Calu3 (cell line): ENCODE measurements at regions of chr3 and their contacts with region 1.

Region 1: DNA sequence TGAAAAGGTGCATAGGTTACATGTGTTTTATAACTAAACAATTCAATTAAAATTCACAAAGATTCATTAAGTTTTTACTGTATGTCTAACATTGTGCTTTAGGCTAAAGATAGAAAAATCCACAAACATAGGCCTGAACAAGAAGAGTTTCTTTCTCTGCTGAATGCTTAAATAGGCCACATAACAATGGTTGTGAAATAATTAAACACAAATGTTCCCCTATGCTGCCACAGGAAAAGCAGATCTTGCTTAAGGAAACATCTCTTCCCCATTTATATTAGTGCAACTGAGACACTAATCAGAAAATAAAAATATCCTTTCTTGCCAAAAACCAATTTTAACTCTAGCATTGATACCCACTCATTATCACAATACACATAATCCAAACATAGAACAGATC is 725.4 kb upstream of the DPPA4 start:
- DNase-seq: no peak
- H3K4me3 Mint-ChIP-seq: no peak overlapping the region
- H3K27ac Mint-ChIP-seq: no peak overlapping the region
- H3K4me1 Mint-ChIP-seq: no peaks in the 10 kb centered on the region
- H3K27me3 Mint-ChIP-seq: no peaks in the 10 kb centered on the region
- CTCF ChIP-seq: no peak

Region 2: GRCh38 chr3:110077093-110077492 is 14.4 kb after region 1 on chr3:
- CTCF ChIA-PET with region 1: no interaction called
- intact Hi-C with region 1: loop called (anchors 2 kb)
- DNase-seq: no peak
- H3K4me3 Mint-ChIP-seq: no peak overlapping the region
- H3K27ac Mint-ChIP-seq: no peak overlapping the region
- H3K4me1 Mint-ChIP-seq: no peaks in the 10 kb centered on the region
- H3K27me3 Mint-ChIP-seq: no peaks in the 10 kb centered on the region
- CTCF ChIP-seq: no peak